IMR-90 (cell line): ENCODE measurements at regions of chr11 and their contacts with region 1.

Region 1: GRCh38 chr11:28697920-28698827 is 590.0 kb downstream of the METTL15 start:
- DNase-seq: peak; percentile 61
- ATAC-seq: peak; percentile 64
- H3K4me3 ChIP-seq: no peak overlapping the region
- H3K27ac ChIP-seq: peak overlapping the region; percentile 11; the same call in 1 of the 2 replicates
- H3K4me1 ChIP-seq: peaks cover 14% of the 10 kb centered on the region
- H3K27me3 ChIP-seq: no peaks in the 10 kb centered on the region
- CTCF ChIP-seq: peak; percentile 78
- POLR2A ChIP-seq: no peak
- RAD21 ChIP-seq: peak; percentile 81

Region 2: GRCh38 chr11:28343276-28344233 is 354.6 kb before region 1 on chr11:
- CTCF ChIA-PET with region 1: no interaction called
- POLR2A ChIA-PET with region 1: no interaction called
- dilution Hi-C with region 1: no loop called
- in situ Hi-C with region 1: no loop called
- intact Hi-C with region 1: loop called (anchors 10 kb)
- DNase-seq: peak; percentile 95
- ATAC-seq: peak; percentile 90
- H3K4me3 ChIP-seq: no peak overlapping the region
- H3K27ac ChIP-seq: peak overlapping the region; percentile 9; the same call in 1 of the 2 replicates
- H3K4me1 ChIP-seq: no peaks in the 10 kb centered on the region
- H3K27me3 ChIP-seq: no peaks in the 10 kb centered on the region
- CTCF ChIP-seq: no peak
- POLR2A ChIP-seq: no peak
- RAD21 ChIP-seq: no peak

Region 3: DNA sequence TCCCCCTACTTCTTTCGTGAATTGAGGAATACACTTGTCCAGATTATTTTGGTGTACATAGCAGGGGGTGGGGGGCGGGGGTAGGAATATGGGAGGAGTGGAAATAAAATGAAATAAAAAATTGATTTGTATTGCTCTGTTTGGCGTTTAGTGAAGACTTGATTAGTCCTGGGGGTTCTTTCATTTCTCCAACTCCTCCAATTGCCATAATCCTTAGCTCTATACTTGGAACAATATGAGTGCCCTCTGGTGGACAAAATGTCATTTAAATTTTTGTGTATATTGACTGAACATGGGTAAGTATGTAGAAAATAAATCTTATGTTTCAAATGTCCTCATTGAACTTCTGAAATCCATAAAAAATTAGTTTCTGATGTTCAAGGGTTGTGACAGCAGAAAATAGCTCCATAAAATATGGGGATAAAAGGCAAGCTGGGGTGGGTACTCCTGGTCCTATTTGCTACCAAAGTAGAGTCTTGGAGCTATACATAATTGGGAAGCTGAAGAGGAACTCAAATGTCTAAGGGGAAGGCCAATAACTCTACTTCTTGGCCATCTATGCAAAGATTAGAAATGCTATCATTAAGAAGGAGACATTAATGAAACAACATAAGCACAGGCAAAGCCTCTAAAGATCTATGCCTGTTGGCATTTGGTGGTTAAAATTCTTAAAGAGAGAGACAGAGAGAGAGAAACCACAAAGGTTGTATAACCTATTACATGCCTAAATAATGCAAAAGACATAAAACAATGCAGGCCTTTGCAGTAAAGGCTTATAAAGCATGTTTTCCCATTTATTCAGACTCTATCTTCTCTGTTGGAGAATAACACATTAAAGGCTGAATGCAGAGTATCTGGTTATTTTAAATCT is 168.4 kb before region 1 on chr11:
- CTCF ChIA-PET with region 1: no interaction called
- POLR2A ChIA-PET with region 1: no interaction called
- dilution Hi-C with region 1: no loop called
- in situ Hi-C with region 1: no loop called
- intact Hi-C with region 1: loop called (anchors 5 kb)
- DNase-seq: peak; percentile 82
- ATAC-seq: peak; percentile 64
- H3K4me3 ChIP-seq: no peak overlapping the region
- H3K27ac ChIP-seq: peak overlapping the region; percentile 19; the same call in 1 of the 2 replicates
- H3K4me1 ChIP-seq: peaks cover 3% of the 10 kb centered on the region; the same call in 1 of the 2 replicates
- H3K27me3 ChIP-seq: no peaks in the 10 kb centered on the region
- CTCF ChIP-seq: peak; percentile 57
- POLR2A ChIP-seq: no peak
- RAD21 ChIP-seq: peak; percentile 59

Region 4: DNA sequence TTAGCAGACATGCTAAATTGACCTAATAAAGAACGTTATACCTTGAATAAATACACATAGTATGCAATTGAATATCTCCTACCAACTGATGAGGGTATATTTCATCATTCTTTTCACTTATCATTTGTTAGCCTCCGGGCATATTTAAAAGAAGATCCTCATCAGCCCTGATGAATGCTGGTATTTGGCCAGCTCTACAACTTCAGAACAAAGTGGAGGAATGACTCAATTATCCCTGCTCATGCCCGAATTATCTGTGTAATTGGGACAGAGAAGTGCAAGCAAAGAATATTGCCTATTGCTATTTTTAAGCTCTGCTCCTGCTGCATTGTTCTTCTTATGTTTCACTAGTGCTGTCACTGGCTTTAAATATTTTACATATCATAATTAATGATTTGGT is 32.2 kb after region 1 on chr11:
- CTCF ChIA-PET with region 1: no interaction called
- POLR2A ChIA-PET with region 1: no interaction called
- dilution Hi-C with region 1: no loop called
- in situ Hi-C with region 1: no loop called
- intact Hi-C with region 1: loop called (anchors 1 kb)
- DNase-seq: peak; percentile 38
- ATAC-seq: no peak
- H3K4me3 ChIP-seq: no peak overlapping the region
- H3K27ac ChIP-seq: no peak overlapping the region
- H3K4me1 ChIP-seq: peaks cover 4% of the 10 kb centered on the region
- H3K27me3 ChIP-seq: no peaks in the 10 kb centered on the region
- CTCF ChIP-seq: no peak
- POLR2A ChIP-seq: no peak
- RAD21 ChIP-seq: no peak